Common myeloid progenitor, CD34-positive (primary cell): ENCODE measurements at regions of chr12 and their contacts with region 1.

Region 1: DNA sequence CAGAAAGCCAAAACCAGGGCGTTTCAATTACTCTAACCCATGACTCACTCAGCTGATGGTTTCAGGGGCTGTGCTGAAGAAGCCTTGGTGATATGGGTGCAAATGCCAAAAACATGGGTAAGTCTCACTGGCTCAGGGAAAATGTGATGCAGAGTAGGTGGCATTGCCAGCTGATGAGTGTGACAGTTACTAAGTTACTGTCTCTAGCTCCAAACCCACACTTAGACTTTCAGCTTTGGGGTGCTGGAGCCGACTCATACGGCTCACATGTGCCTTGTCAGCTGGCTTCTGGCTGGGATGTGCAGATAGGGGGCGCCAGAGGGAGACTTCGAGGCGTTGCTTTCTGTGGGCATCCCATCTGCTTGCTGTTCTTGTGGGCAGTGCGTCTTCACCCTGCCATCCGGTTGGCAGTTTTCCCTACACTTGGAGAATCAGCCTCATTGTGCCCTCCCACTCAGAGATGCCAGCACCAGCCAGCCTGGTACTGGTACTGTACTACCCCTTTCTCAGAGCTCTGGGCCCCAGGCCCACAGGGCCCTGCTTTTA is 11.1 kb upstream of the KRT7 start:
- DNase-seq: peak; percentile 46 to 80 (median 75)
- H3K4me3 ChIP-seq: no peak overlapping the region
- H3K27ac ChIP-seq: no peak overlapping the region
- H3K4me1 ChIP-seq: no peaks in the 10 kb centered on the region
- H3K27me3 ChIP-seq: peaks cover 2 to 14% (median 7%) of the 10 kb centered on the region in 5 experiments

Region 2: DNA sequence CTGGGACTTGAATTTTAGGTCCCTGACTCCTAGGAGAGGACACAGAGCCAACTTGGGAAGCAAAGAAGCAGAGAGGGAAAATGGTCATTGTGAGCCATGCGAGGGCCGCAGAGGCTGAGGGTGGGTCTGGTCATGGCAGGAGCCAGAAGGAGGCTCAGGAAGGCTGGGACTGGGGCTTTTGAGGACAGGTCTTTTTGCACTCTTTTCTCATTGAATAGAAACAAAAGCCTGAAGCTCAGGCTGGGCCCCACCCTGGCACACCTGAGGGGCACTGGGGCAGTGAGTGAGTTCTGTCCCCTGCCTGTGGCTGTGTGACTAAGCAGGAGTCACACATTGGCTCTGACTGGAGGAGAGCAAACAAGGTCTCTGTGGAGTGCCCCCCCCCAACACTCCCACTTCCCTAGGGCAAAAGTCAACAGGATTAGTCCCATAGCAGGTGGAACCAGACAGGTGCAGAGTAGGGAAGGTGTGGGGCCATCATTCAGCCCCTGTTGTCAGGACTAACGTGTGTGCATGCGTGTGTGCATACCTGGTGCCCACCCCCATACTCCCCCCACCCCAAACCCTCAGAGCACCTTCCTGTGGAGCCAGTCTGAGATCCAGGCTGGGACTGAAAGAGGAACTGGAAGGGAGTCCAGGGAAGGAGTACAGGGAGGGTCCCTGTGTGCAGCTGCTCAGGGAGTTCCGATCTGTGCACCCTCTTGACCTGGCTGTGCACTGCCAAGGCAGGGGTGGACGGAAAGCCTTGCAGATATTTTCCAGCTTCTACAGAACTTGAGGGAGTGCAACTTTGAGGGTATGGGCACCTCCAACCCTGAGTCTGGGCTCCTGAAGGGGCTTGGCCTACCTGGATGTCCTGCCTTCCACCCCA is 14.1 kb after region 1 on chr12:
- CTCF ChIA-PET with region 1: interaction called, 20 read pairs
- POLR2A ChIA-PET with region 1: no interaction called
- DNase-seq: no peak
- H3K4me3 ChIP-seq: no peak overlapping the region
- H3K27ac ChIP-seq: no peak overlapping the region
- H3K4me1 ChIP-seq: peaks cover 0 to 8% (median 1%) of the 10 kb centered on the region in 4 experiments
- H3K27me3 ChIP-seq: peaks cover 0 to 50% (median 20%) of the 10 kb centered on the region in 5 experiments